A549 (cell line): ENCODE measurements at regions of chr6 and their contacts with region 1.

Region 1: DNA sequence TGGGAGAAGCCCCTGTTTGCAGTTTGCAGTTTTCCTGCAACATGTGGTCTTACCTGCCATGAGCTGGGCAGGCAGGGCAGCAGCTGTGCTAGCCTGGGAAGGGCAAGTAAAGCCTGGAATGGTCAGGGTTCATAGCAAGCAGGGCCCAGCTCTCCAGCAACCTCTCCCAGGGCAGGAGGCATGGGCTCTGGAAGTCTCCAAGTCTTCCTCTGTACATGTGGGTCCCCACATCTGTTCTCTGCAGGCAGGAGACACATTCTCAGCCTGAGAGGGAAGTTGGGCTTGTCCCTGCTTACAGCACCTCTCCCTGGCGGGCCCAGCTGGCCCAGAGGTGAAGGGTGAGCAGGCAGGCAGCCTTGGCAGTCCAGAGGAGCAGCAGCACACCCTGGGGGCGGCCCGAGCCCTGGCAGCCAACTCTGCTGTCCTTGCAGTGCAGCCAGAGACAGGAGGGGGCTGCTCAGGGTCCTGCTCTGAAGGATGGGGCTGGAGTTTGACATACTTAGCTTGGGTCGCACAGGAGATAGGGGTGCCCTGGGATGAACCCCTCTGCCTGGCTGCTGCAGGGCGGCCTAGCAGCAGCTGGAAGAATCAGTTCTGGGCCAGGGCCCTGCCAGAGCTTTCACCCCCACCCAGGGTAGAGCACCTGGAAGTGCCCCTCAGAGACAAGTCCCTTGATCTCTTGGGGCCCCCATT is 176.0 kb downstream of the MRPL14 start:
- DNase-seq: peak in 1 of 2 experiments; percentile 28
- ATAC-seq: peak; percentile 83 to 91
- H3K4me3 ChIP-seq: no peak overlapping the region
- H3K27ac ChIP-seq: peak overlapping the region in 1 of 2 experiments; percentile 17; a peak in 1 of 6 replicates
- H3K4me1 ChIP-seq: no peaks in the 10 kb centered on the region
- CTCF ChIP-seq: 0 out of 3 replicates have a peak, but pooled peaks have one; percentile 11
- EP300 ChIP-seq: no peak
- POLR2A ChIP-seq: no peak
- RAD21 ChIP-seq: peak; percentile 37 to 47

Region 2: GRCh38 chr6:43937236-43938164 is 13.7 kb before region 1 on chr6:
- CTCF ChIA-PET with region 1: interaction called, 10 read pairs
- POLR2A ChIA-PET with region 1: no interaction called
- DNase-seq: no peak
- ATAC-seq: no peak
- H3K4me3 ChIP-seq: no peak overlapping the region
- H3K27ac ChIP-seq: no peak overlapping the region
- H3K4me1 ChIP-seq: no peaks in the 10 kb centered on the region
- CTCF ChIP-seq: no peak
- EP300 ChIP-seq: no peak
- POLR2A ChIP-seq: no peak
- RAD21 ChIP-seq: no peak

Region 3: GRCh38 chr6:44030812-44031454 is 79.7 kb after region 1 on chr6:
- CTCF ChIA-PET with region 1: no interaction called
- POLR2A ChIA-PET with region 1: no interaction called
- DNase-seq: no peak
- ATAC-seq: no peak
- H3K4me3 ChIP-seq: no peak overlapping the region
- H3K27ac ChIP-seq: peak overlapping the region in 1 of 2 experiments; percentile 48; a peak in 1 of 6 replicates
- H3K4me1 ChIP-seq: peaks cover 24% of the 10 kb centered on the region
- CTCF ChIP-seq: no peak
- EP300 ChIP-seq: no peak
- POLR2A ChIP-seq: no peak
- RAD21 ChIP-seq: no peak

Region 4: GRCh38 chr6:44456070-44456965 is 505.1 kb after region 1 on chr6:
- CTCF ChIA-PET with region 1: no interaction called
- POLR2A ChIA-PET with region 1: no interaction called
- DNase-seq: peak; percentile 43 to 48
- ATAC-seq: peak; percentile 62 to 83; a peak in 4 of 6 replicates
- H3K4me3 ChIP-seq: no peak overlapping the region
- H3K27ac ChIP-seq: no peak overlapping the region
- H3K4me1 ChIP-seq: peaks cover 16% of the 10 kb centered on the region; the same call in 2 of the 3 replicates
- CTCF ChIP-seq: peak; percentile 68
- EP300 ChIP-seq: no peak
- POLR2A ChIP-seq: no peak
- RAD21 ChIP-seq: peak; percentile 61 to 68